Posterior vena cava (tissue), 2 donors: ENCODE measurements at regions of chr14 and their contacts with region 1.

Region 1: DNA sequence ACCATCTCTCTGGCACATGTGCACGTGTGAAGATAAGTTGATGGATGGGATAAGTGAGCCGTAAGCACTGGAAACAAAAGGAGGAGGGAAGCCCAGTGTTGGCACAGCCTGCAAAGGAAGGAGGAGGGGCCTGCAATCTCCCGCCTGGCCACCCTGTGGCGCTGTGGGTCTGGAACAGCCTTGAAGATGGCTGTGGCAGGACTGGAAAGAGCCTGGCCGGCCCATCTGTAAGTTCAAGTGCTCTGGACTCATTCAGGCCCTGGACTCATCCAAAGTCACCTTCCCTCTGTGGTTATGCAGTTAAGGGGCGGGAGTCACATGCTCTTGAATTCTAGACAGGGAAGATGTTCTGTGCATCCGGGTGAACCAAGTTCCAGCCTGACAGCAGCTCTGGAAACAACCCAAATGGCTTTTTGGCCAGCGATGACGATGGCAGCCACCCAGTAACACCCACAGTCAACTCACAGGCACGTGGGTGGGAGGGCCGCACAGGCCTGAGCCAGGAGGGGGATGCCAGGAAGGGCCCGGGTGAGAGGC is 50.4 kb downstream of the CHGA start:
- DNase-seq: peak; percentile 91

Region 2: DNA sequence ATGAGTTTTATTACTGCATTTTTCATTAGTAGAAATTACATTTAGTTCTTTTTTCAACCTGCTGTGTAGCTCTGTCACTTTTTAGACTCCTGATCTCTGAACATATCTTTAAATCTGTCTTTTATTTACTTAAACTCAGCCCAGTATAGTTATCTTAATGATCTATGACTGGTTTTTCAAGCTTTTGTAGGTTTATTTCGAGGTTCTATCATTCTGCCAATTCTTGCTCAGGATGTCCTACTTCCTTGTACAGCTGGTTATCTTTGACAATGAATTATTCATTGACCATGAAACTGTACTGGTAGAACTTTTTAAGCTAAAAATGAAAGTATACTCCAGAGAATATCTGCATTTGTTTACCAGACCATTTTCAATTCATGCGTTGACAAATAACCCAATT is 1143.8 kb before region 1 on chr14:
- intact Hi-C with region 1: loop called in 1 of 2 experiments (anchors 5 kb)
- DNase-seq: no peak

Region 3: GRCh38 chr14:92819011-92819597 is 154.2 kb before region 1 on chr14:
- intact Hi-C with region 1: no loop called
- DNase-seq: no peak

Region 4: GRCh38 chr14:93286212-93286890 is 313.0 kb after region 1 on chr14:
- intact Hi-C with region 1: no loop called
- DNase-seq: no peak